A673 (cell line): ENCODE measurements at regions of chr17 and their contacts with region 1.

Region 1: DNA sequence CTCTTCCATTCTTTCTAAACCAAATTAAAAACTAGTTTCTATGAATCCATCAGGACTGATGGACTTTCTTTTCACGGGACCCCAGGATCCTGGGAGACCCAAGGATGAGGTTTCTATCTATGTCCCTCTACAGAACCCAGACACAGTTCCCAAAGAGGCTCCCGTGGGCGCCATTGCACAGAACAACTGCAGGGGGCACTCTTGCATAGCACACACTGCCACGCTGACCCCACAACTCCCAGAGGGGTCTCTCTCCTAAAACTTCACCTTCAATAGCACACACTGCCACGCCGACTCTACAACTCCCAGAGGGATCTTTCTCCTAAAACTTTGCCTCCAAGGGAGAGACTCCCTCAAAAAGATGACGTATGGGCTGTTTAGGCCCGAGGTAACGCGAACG is 9.0 kb downstream of the ABR start:
- DNase-seq: no peak
- H3K4me3 ChIP-seq: no peak overlapping the region
- H3K27ac ChIP-seq: no peak overlapping the region
- H3K4me1 ChIP-seq: no peaks in the 10 kb centered on the region
- H3K27me3 ChIP-seq: no peaks in the 10 kb centered on the region
- CTCF ChIP-seq: peak; percentile 57

Region 2: GRCh38 chr17:1206026-1206777 is 35.5 kb after region 1 on chr17:
- CTCF ChIA-PET with region 1: no interaction called
- POLR2A ChIA-PET with region 1: no interaction called
- intact Hi-C with region 1: no loop called
- DNase-seq: no peak
- H3K4me3 ChIP-seq: no peak overlapping the region
- H3K27ac ChIP-seq: no peak overlapping the region
- H3K4me1 ChIP-seq: no peaks in the 10 kb centered on the region
- H3K27me3 ChIP-seq: peaks cover under 1% of the 10 kb centered on the region
- CTCF ChIP-seq: no peak

Region 3: DNA sequence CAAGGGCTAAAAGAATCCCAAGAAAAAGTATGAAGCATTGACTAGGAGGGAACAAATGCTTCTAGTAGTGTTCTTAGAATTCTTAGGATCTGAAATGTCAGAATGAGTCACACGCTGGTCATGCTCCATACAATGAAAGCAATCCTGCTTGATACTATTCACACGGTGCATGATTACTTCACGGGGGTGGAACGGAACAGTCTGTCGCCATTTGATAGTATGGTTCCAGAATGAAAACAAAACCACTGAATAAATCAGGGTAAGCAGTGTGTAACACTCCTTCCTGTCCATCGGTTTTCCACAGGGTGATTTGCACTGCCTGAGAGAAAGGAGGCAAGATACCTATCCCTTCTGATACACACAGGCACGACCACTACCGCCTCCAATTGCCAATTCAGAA is 252.2 kb after region 1 on chr17:
- CTCF ChIA-PET with region 1: no interaction called
- POLR2A ChIA-PET with region 1: interaction called, 10 read pairs
- intact Hi-C with region 1: no loop called
- DNase-seq: peak; percentile 83
- H3K4me3 ChIP-seq: no peak overlapping the region
- H3K27ac ChIP-seq: peak overlapping the region; percentile 15
- H3K4me1 ChIP-seq: peaks cover 8% of the 10 kb centered on the region
- H3K27me3 ChIP-seq: no peaks in the 10 kb centered on the region
- CTCF ChIP-seq: no peak